PC-9 (cell line): ENCODE measurements at regions of chr2 and their contacts with region 1.

Region 1: DNA sequence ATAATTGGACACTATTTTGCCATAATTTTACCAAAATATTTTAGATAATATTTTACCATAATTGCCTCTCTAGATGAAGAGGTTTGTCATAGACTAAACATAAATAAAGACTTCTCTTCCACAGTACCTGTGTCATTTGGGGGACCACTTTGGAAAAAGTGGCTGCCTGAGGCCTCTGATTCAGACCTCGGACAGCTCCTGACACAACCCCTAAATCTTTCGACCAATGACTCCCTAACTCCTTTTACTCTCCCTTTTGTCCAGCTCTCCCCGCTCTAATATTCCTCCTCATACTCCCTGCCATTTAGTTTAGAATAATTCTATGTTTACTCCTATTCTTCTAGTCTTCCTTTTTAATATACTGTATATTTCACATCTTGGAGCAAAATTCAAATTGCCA is 36.0 kb upstream of the UBE2E3 start:
- DNase-seq: no peak
- H3K4me3 ChIP-seq: no peak overlapping the region
- H3K27ac ChIP-seq: no peak overlapping the region
- H3K4me1 ChIP-seq: no peaks in the 10 kb centered on the region
- H3K27me3 ChIP-seq: no peaks in the 10 kb centered on the region
- CTCF ChIP-seq: no peak

Region 2: GRCh38 chr2:180933332-180933731 is 11.0 kb before region 1 on chr2:
- CTCF ChIA-PET with region 1: no interaction called
- POLR2A ChIA-PET with region 1: no interaction called
- intact Hi-C with region 1: loop called (anchors 2 kb)
- DNase-seq: no peak
- H3K4me3 ChIP-seq: no peak overlapping the region
- H3K27ac ChIP-seq: no peak overlapping the region
- H3K4me1 ChIP-seq: peaks cover 9% of the 10 kb centered on the region; the same call in 1 of the 2 replicates
- H3K27me3 ChIP-seq: no peaks in the 10 kb centered on the region
- CTCF ChIP-seq: no peak